Posterior cingulate gyrus (tissue), 11 donors: ENCODE measurements at regions of chrX and their contacts with region 1.

Region 1: DNA sequence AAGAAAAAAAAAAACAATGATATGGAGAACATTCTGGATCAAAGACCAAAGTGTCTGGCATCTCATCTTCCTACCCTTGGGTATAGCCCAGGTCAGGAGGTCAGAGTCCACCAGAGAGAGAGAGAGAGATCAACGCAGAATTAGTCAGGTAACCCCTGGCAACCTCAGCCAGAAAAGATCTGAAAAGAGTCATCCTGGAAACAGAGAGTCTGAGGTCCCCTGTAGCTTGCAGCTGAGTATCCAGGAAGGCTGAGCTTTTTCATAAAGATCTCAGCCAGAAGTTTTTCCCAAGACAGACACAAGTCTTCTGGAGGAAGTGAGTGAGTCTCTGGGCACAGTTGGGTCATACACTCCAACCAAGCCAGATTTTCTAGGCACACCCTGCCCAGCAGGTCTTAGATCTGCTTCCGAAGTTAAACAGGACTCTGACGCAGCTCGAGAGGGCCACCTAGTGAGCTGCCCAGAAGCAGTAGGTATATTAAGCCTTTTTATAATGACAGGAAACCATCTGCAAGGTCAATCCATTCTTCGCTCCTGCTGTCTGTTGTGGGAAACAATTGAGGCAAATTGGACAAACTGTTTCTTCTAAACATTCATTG is 35.7 kb downstream of the ACE2 start:
- DNase-seq: peak; percentile 25 to 90 (median 37)

Region 2: GRCh38 chrX:15299941-15300851 is 264.9 kb before region 1 on chrX:
- intact Hi-C with region 1: loop called (anchors 10 kb)
- DNase-seq: no peak

Region 3: DNA sequence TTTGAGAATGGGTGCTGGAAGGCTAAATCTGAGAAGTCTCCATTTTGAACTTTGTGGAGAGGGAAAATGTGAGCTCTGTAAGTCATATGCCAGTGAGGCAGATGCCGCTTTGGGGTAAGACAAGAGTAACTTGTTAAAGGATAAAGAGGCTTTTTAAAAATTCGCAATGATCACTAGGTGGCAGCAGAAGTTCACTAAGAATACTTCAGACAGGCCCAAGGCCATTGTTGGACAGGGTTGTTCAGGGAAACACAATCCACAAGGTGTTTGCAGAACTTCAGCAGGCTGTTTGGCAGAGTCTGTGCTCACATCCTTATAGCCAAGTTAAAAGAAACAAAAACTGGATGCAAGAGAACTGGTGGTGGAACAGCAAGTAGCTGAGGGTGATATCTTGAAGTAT is 216.0 kb before region 1 on chrX:
- intact Hi-C with region 1: loop called (anchors 5 kb)
- DNase-seq: peak in 1 of 10 donors; percentile 18

Region 4: GRCh38 chrX:15471016-15471415 is 94.1 kb before region 1 on chrX:
- intact Hi-C with region 1: loop called (anchors 1 kb)
- DNase-seq: peak in 8 of 10 donors; percentile 39 to 90 (median 56)

Region 5: GRCh38 chrX:15493118-15493962 is 71.7 kb before region 1 on chrX and contains the start of gene PIR:
- intact Hi-C with region 1: loop called (anchors 1 kb)
- DNase-seq: peak; percentile 71 to 97 (median 79)